Activated CD8-positive, alpha-beta T cell treated with anti-CD3 and anti-CD28 coated beads for 36 hours (primary cell): ENCODE measurements at regions of chr3 and their contacts with region 1.

Region 1: DNA sequence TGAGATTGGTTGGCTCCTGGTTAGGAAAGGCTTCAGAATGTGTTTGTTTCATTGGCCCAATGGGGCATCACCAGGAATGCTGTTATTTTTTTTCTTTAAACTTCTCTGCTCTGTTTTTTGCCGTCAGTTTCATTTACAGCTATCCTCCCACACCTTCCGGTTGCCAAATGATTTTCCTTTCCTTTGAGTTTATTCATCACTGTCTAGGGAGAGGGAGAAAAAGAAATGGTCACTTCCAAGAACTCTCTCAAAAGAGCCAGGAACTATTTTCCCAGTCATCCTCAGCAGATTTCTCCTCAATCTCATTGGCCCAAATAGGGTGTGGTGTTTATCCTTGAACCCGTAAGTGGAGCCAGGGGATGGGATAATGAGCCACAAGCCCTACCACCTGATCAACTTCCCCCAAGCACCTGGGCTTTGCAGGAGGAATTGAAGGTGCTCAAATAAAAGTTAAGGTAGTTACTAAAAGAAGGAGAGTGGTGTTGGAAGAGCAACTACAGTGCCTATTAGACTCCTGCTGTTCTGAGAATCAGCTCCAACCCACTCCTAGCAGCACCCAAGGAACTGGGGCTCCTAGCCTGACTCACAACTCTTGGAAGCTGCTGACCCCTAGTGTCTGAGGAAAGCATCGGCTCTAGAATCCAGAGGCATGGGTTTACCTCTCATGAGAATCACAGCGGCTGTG is 183.8 kb upstream of the IL12A start:
- DNase-seq: peak; percentile 51
- ATAC-seq: peak; percentile 79
- H3K4me3 Mint-ChIP-seq: no peak overlapping the region
- H3K27ac Mint-ChIP-seq: no peak overlapping the region
- H3K4me1 Mint-ChIP-seq: no peaks in the 10 kb centered on the region
- H3K27me3 Mint-ChIP-seq: peaks cover 5% of the 10 kb centered on the region
- CTCF ChIP-seq: peak; percentile 58

Region 2: GRCh38 chr3:158845765-158846350 is 959.0 kb before region 1 on chr3:
- CTCF ChIA-PET with region 1: no interaction called
- POLR2A ChIA-PET with region 1: no interaction called
- intact Hi-C with region 1: loop called (anchors 10 kb)
- DNase-seq: peak; percentile 48
- ATAC-seq: peak; percentile 75
- H3K4me3 Mint-ChIP-seq: no peak overlapping the region
- H3K27ac Mint-ChIP-seq: no peak overlapping the region
- H3K4me1 Mint-ChIP-seq: peaks cover 6% of the 10 kb centered on the region
- H3K27me3 Mint-ChIP-seq: no peaks in the 10 kb centered on the region
- CTCF ChIP-seq: peak; percentile 74

Region 3: DNA sequence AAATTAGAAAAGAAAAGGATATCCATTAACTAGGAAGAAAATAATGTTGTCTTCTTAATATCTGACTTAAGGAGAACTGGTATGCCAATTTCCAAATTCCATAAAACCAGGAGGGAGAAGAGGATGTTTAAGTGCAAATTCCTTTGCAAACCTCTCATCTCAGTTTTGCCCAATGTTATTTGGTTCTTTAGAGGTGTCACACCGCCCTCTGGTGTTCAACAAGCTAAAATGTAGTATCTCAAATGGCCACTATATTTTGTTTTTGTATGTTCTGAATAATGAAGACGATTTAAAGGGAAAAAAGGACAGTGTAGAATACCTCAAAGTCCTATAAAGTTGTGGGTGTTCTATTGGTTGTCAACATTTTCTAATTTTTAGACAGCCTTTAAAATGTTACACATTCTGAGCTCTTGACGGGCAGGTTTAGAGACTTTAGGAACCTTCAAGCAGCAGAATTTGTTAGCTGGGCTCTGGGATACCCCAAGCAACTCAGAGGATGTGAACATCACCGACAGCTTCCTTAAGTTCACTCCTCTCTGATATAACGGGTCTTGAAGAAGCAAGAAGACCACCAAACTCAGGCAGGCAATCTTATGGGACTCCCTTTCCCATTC is 544.7 kb before region 1 on chr3:
- CTCF ChIA-PET with region 1: interaction called, 29 read pairs
- POLR2A ChIA-PET with region 1: no interaction called
- intact Hi-C with region 1: loop called (anchors 2 kb)
- DNase-seq: peak; percentile 61
- ATAC-seq: no peak
- H3K4me3 Mint-ChIP-seq: no peak overlapping the region
- H3K27ac Mint-ChIP-seq: no peak overlapping the region
- H3K4me1 Mint-ChIP-seq: no peaks in the 10 kb centered on the region
- H3K27me3 Mint-ChIP-seq: peaks cover 6% of the 10 kb centered on the region
- CTCF ChIP-seq: peak; percentile 65

Region 4: GRCh38 chr3:159322322-159322939 is 482.4 kb before region 1 on chr3:
- CTCF ChIA-PET with region 1: interaction called, 9 read pairs
- POLR2A ChIA-PET with region 1: no interaction called
- intact Hi-C with region 1: loop called (anchors 2 kb)
- DNase-seq: peak; percentile 48
- ATAC-seq: no peak
- H3K4me3 Mint-ChIP-seq: no peak overlapping the region
- H3K27ac Mint-ChIP-seq: no peak overlapping the region
- H3K4me1 Mint-ChIP-seq: no peaks in the 10 kb centered on the region
- H3K27me3 Mint-ChIP-seq: no peaks in the 10 kb centered on the region
- CTCF ChIP-seq: peak; percentile 63

Region 5: GRCh38 chr3:159763602-159764489 is 41.0 kb before region 1 on chr3:
- CTCF ChIA-PET with region 1: no interaction called
- POLR2A ChIA-PET with region 1: no interaction called
- intact Hi-C with region 1: no loop called
- DNase-seq: peak; percentile 68
- ATAC-seq: peak; percentile 79
- H3K4me3 Mint-ChIP-seq: peak overlapping the region; percentile 71
- H3K27ac Mint-ChIP-seq: peak overlapping the region; percentile 28
- H3K4me1 Mint-ChIP-seq: peaks cover 14% of the 10 kb centered on the region
- H3K27me3 Mint-ChIP-seq: peaks cover 56% of the 10 kb centered on the region
- CTCF ChIP-seq: no peak

Region 6: GRCh38 chr3:159852821-159853505 is 48.1 kb after region 1 on chr3:
- CTCF ChIA-PET with region 1: no interaction called
- POLR2A ChIA-PET with region 1: no interaction called
- intact Hi-C with region 1: no loop called
- DNase-seq: no peak
- ATAC-seq: no peak
- H3K4me3 Mint-ChIP-seq: no peak overlapping the region
- H3K27ac Mint-ChIP-seq: no peak overlapping the region
- H3K4me1 Mint-ChIP-seq: no peaks in the 10 kb centered on the region
- H3K27me3 Mint-ChIP-seq: peaks cover 8% of the 10 kb centered on the region
- CTCF ChIP-seq: no peak

Region 7: DNA sequence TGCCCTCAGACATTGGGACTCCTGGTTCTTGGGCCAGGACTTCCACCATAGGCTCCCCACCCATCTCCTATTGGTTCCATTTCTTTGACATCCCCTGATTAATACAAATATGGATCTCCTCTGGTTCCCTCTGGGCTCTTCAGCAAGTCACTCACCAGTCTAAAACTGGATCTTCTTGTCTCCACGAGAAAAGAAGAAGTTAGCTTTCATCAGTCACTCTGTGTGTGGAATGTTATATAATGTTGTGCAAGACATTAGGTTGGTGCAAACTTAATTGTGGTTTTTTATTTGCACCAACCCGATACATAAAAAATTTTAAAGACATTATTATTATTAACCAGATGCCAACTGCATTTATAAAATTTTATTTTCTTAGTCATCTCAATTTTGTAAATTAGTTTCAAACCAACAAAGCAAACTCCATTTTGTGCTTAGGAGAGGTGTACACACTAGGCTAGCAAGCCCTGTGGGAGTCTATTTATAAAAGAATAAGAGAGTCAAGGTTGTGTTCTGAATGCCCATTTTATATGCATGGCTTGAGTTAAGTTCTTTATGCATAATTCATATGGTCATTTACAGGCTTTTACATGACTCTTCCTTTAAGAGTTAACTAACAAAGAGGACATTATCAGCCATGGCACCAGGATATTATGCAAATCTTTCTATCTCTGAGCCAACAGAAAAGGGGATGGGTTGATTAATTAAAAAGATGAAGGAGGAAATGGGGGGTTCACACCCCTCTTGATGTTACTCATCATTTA is 148.6 kb after region 1 on chr3:
- CTCF ChIA-PET with region 1: no interaction called
- POLR2A ChIA-PET with region 1: no interaction called
- intact Hi-C with region 1: no loop called
- DNase-seq: no peak
- ATAC-seq: no peak
- H3K4me3 Mint-ChIP-seq: no peak overlapping the region
- H3K27ac Mint-ChIP-seq: no peak overlapping the region
- H3K4me1 Mint-ChIP-seq: no peaks in the 10 kb centered on the region
- H3K27me3 Mint-ChIP-seq: peaks cover 25% of the 10 kb centered on the region
- CTCF ChIP-seq: no peak